ENCODE measurements at regions of chr10 and their contacts with region 1.

Region 1: GRCh38 chr10:21495752-21496342 is 29.6 kb downstream of the SKIDA1 start:
- DNase-seq: peak; percentile 99
- H3K4me3 ChIP-seq: peak overlapping the region; percentile 92
- H3K27ac ChIP-seq: peak overlapping the region; percentile 62 to 91
- H3K4me1 ChIP-seq: peaks cover 0 to 7% of the 10 kb centered on the region in 2 experiments; a peak in 2 of 4 replicates
- H3K27me3 ChIP-seq: no peaks in the 10 kb centered on the region
- CTCF ChIP-seq: peak; percentile 90
- EP300 ChIP-seq: peak; percentile 54 to 58; a peak in 3 of 4 replicates
- RAD21 ChIP-seq: peak; percentile 90

Region 2: DNA sequence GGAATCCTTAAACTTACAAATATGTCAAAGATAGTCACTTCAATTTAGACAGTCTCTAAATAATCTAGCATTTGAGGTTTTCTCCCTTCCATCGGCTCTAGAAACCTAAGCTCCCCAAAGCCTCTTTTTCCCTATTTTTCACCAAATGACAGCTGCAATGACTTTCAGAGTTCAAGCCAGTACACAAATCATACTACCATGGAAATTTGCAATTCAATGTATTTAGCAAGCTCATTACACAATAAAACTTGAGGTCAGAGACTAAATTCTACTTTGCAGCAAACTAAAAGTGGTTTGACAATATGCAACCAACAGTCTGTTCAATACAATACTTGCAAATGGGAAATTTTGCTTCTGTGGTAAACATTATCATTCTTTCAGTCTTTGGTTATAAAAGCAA is 50.7 kb before region 1 on chr10:
- CTCF ChIA-PET with region 1: no interaction called
- POLR2A ChIA-PET with region 1: no interaction called
- DNase-seq: no peak
- H3K4me3 ChIP-seq: no peak overlapping the region
- H3K27ac ChIP-seq: no peak overlapping the region
- H3K4me1 ChIP-seq: no peaks in the 10 kb centered on the region
- H3K27me3 ChIP-seq: no peaks in the 10 kb centered on the region
- CTCF ChIP-seq: no peak
- EP300 ChIP-seq: no peak
- RAD21 ChIP-seq: no peak

Region 3: DNA sequence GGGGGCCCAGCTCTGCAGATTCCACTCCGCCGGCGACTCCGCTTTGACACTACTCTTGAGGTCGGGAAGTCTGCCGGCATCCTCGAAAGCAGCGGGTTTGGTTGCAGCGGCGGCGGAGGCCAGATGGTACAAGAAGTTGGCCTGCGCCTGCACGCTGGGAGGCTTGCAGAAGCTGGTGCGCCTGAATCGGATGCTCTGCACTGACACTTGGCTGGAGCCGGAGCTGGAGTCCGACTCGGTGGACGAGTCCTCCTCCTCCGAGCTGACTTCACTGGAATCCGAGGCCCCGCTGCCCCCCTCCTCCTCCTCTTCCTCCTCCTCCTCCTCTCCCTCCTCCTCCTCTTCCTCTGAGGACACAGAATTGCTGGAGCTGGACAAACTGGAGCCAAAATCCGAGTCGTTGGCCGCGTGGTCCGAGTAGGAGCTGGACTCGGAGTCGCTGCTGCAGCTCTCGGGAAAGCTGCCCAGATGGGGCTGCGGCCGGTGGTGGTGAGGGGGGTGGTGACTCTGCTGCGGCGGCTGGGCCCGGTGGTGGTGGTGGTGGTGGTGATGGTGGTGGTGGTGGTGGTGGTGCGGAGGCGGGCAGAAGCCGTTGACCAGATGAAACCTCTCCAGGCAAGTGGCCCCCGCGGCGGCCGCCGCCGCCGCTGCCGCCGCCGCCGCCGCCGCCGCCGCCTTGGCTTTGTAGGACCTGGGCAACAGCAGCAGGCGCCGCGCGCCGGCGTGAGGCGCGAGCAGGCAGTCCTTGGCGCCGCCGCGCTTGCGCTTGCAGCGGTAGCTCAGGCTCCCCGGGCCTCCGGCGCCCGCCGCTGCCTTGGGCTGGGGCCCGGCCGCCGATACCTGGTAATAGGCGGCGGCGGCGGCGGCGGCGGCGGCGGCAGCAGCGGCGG is 20.6 kb after region 1 on chr10:
- CTCF ChIA-PET with region 1: interaction called, 101 read pairs
- POLR2A ChIA-PET with region 1: interaction called, 24 read pairs
- DNase-seq: peak; percentile 67
- H3K4me3 ChIP-seq: peak overlapping the region; percentile 53 to 64
- H3K27ac ChIP-seq: peak overlapping the region; percentile 44 to 99; a peak in 3 of 4 replicates
- H3K4me1 ChIP-seq: peaks cover 24 to 25% of the 10 kb centered on the region in 2 experiments; a peak in 3 of 4 replicates
- H3K27me3 ChIP-seq: no peaks in the 10 kb centered on the region
- CTCF ChIP-seq: no peak
- EP300 ChIP-seq: no peak
- RAD21 ChIP-seq: no peak

Region 4: DNA sequence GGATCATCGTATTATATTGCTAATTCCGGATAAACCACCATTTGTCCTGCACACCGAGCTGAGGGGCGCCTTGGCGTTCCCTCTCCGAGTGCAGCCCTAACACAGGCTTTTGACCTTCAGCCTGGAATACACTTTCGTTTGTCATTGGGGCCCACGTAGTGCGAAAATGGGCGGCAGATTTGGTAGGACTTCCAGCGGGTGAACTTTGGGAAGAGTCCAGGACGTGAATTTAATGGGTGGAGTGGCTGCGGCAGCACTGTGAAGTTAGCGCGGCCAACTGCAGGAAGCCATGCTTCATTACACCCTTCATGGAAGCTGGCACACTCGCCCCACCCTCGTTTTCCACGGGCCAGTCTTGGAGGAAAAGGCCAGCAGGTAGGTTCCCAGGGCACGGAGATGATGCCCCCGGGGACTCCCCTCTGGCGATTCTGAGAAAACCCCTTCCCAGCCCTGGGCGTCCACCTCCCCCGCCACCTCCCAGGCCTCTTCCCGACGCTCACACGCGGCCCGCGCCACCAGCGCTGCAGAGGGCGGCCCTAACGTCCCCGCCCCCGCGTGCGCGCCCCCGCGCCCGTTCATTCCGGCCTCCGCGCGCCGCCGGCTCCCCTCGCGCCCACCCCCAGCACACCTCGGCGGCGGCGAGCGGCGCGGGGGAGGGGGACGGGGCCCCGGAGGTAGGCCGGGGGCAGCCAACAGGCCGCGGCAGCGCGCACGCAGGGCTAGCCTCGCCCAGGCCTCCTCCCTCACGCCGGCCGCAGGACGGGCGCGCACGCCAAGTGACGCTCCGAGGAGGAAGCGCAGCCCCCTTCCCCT is 37.8 kb after region 1 on chr10 and contains the start of gene MLLT10:
- CTCF ChIA-PET with region 1: interaction called, 18 read pairs
- POLR2A ChIA-PET with region 1: interaction called, 16 read pairs
- DNase-seq: peak; percentile 96
- H3K4me3 ChIP-seq: peak within 1 kb of the TSS; percentile 74
- H3K27ac ChIP-seq: peak within 1 kb of the TSS; percentile 94 to 99
- H3K4me1 ChIP-seq: peaks cover 15 to 32% of the 10 kb centered on the region in 2 experiments; a peak in 3 of 4 replicates
- H3K27me3 ChIP-seq: no peaks in the 10 kb centered on the region
- CTCF ChIP-seq: peak; percentile 44
- EP300 ChIP-seq: peak in 1 of 2 experiments; percentile 29; a peak in 1 of 4 replicates
- RAD21 ChIP-seq: no peak
- polyA plus RNA-seq, gene MLLT10: 23.9 and 26.0 TPM in 2 replicates

Region 5: GRCh38 chr10:21634599-21635365 is 138.9 kb after region 1 on chr10:
- CTCF ChIA-PET with region 1: no interaction called
- POLR2A ChIA-PET with region 1: no interaction called
- DNase-seq: no peak
- H3K4me3 ChIP-seq: no peak overlapping the region
- H3K27ac ChIP-seq: no peak overlapping the region
- H3K4me1 ChIP-seq: no peaks in the 10 kb centered on the region; a peak in 1 of 4 replicates
- H3K27me3 ChIP-seq: no peaks in the 10 kb centered on the region
- CTCF ChIP-seq: no peak
- EP300 ChIP-seq: no peak
- RAD21 ChIP-seq: no peak

Region 6: DNA sequence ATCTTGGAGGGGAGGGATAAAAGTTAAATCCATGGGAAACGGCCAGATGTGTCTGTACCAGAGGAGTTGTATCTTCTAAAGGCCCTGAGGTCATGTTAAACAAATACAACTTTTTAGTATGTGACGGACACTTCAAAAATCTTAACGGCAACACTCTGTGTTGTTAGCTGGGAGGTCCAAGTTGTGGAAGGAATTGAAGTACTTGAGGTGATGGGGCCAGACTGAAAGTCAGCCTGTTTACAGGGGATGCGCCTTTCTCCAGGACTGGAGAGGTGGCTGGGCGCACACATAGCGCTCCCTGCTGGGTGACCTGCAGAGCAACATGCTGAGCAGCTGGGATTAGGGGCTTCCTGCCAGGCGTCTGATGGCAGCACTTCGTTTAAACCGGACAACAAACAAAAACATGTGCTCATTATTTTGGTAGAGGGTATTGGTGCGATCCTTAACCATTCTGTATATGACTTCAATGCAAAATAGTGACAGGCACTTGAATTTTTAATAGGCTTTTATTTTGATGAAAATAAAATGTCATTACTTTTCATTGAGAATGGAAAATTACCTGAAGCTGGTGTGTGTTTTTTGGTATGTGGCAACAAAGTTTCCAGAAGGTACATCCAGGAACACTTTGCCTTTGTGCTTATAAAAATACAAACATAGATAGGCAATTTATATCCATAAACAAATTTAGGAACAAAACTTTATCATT is 236.4 kb after region 1 on chr10:
- CTCF ChIA-PET with region 1: interaction called, 73 read pairs
- POLR2A ChIA-PET with region 1: interaction called, 5 read pairs
- DNase-seq: peak; percentile 81
- H3K4me3 ChIP-seq: peak overlapping the region in 1 of 2 experiments; percentile 26; a peak in 1 of 4 replicates
- H3K27ac ChIP-seq: no peak overlapping the region
- H3K4me1 ChIP-seq: peaks cover 16 to 30% of the 10 kb centered on the region in 2 experiments; a peak in 3 of 4 replicates
- H3K27me3 ChIP-seq: no peaks in the 10 kb centered on the region
- CTCF ChIP-seq: peak; percentile 96
- EP300 ChIP-seq: no peak
- RAD21 ChIP-seq: peak; percentile 96

Region 7: GRCh38 chr10:21972584-21972983 is 476.7 kb after region 1 on chr10:
- CTCF ChIA-PET with region 1: interaction called, 13 read pairs
- POLR2A ChIA-PET with region 1: no interaction called
- DNase-seq: no peak
- H3K4me3 ChIP-seq: no peak overlapping the region
- H3K27ac ChIP-seq: no peak overlapping the region
- H3K4me1 ChIP-seq: peaks cover 9 to 15% of the 10 kb centered on the region in 2 experiments; a peak in 3 of 4 replicates
- H3K27me3 ChIP-seq: no peaks in the 10 kb centered on the region
- CTCF ChIP-seq: no peak
- EP300 ChIP-seq: no peak
- RAD21 ChIP-seq: no peak

Measured in SK-N-SH (cell line).